Left colon (tissue), 2 donors: ENCODE measurements at regions of chr9 and their contacts with region 1.

Region 1: DNA sequence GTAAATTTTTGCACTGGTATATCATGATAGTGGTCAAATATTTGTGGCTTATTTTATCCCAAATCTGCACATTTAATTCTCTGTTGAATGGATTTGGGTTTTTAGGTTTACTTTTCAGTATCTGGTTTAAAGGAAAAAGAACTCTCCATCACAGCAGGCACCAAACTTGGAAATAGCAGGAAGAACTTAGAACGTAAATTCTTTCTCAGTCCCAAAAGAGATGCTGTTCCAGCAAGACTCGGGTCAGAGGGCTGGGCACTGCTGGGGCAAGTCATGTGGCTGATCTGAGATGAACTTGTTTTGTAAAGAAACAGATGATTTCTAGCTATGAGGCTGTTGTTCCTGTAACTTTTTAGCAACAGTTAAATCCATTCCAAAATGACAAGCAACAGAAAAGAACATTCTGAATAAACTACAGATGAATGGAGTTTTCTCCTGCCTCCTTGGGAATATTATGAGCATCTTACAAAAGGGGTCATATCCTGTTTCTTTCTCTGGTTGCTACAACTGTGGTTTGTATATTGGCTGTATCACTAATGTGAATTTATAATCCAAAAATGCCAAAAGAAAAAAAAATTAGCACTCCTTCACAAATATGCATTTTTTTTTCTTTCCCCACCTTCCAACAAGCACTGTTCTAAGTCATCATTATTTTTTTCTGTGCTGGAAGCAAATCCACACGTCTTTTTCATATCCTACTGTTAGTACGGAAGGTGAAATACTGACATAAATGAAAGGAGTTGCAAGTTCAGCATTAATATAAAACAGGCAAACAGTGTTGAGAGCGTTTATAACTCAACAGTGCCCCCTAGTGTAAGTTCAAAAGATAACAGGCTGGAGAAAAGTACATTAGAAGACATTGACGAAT is 31.1 kb downstream of the OR2K2 start:
- DNase-seq: peak in 1 of 2 donors; percentile 33
- ATAC-seq: peak; percentile 71

Region 2: DNA sequence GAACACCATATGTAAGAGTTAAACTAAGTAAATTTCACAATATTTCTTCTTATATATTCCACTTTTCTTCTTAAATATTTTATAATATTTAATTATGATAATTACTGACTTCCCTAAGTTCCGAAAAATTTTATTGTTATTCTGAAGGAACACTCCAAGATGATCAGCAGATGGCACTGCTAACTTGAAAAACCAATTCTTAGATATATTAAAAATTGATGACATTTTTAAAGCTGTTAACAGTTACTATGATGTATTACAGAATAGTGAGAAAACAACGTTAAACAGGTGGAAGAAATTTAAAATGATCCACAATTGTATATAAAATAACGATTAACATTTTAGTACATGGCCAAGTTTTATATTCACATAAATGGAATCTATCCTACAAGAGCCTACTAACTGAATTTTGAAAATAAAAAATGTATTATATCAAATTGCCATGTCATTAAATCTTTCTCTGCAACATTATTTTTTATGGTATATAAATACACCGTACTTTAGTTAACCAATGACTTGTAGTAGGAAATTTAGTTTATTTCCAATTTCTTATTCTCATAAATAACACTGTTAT is 660.5 kb before region 1 on chr9:
- intact Hi-C with region 1: loop called in 1 of 2 experiments (anchors 5 kb)
- DNase-seq: no peak
- ATAC-seq: no peak